ENCODE measurements at regions of chr13 and their contacts with region 1.

Region 1: DNA sequence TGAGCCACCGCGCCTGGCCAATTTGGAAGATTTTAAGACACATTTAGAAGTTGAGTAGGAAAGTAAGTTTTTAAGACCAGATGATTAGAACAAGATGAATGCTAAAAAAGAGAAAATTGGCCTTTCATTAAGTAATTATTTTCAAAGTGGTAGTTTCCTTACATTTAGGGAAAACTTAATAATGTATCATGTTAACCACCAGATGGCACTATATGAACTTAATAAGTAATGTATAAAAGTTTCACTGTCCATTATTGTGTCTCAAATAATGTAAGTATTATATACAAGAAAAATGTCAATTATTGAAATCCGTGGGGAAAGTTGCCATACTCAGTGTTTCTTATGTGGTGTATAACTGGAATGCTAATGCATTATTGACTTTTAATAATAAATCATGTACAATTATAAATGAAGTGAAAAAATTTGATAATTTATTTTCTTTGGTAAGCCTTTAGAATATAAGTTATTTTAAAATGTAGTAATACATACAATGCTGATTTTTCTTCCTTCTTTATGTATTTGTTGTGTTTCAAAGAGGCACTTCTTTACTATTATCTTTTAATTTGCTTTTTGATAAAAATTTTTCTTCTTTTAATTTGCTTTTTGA is 29.2 kb downstream of the COG6 start:
- DNase-seq: no peak
- ATAC-seq: peak; percentile 28
- H3K4me3 Mint-ChIP-seq: no peak overlapping the region
- H3K27ac Mint-ChIP-seq: no peak overlapping the region
- H3K4me1 Mint-ChIP-seq: peaks cover 14% of the 10 kb centered on the region
- H3K27me3 Mint-ChIP-seq: no peaks in the 10 kb centered on the region
- CTCF ChIP-seq: no peak

Region 2: DNA sequence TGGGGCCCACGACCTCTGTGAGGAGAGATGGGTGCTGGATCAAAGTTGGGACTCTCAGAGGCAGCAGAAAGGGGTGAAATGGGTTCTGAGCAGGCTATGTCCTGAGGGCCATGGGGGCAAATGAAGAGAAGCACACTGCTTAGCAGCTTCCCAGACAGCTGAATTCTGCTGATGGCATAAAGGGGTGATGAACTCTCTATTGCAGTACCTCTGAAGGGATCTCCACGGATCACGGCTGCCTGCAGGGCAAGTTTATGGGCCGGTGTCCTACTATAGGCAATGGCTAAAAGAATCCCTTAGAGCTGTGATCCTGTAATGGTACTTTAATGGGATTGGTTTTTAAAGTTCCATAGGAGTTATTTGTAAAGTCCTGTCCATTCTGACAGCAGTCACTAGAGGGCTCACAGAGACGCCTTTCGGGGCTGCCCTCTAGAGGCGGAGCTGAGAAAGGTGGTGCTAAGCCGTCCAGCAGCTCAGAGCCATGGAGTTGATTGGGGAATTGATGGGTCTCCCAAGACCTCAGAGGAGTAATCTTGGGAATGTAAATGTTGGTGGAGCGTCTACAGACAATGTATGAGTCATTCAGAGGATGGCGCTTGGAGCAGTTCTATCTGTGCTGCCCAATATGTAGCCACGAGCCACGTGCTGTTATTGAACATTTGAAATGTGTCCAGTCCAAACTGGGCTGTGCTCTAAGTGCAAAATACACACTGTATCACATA is 258.1 kb after region 1 on chr13:
- CTCF ChIA-PET with region 1: interaction called, 12 read pairs
- POLR2A ChIA-PET with region 1: no interaction called
- intact Hi-C with region 1: loop called (anchors 1 kb)
- DNase-seq: peak; percentile 44
- ATAC-seq: peak; percentile 100
- H3K4me3 Mint-ChIP-seq: no peak overlapping the region
- H3K27ac Mint-ChIP-seq: no peak overlapping the region
- H3K4me1 Mint-ChIP-seq: no peaks in the 10 kb centered on the region
- H3K27me3 Mint-ChIP-seq: peaks cover 1% of the 10 kb centered on the region
- CTCF ChIP-seq: peak; percentile 93

Measured in activated B cell treated with CpG ODN at 0.5 μM for 24 hours (primary cell).